ENCODE measurements at regions of chr1 and their contacts with region 1.

Region 1: GRCh38 chr1:99180343-99180808 is 83.9 kb upstream of the PLPPR4 start:
- DNase-seq: peak; percentile 49 to 63 (median 55)
- H3K4me3 ChIP-seq: no peak overlapping the region
- H3K4me3 Mint-ChIP-seq: no peak overlapping the region
- H3K27ac ChIP-seq: no peak overlapping the region
- H3K27ac Mint-ChIP-seq: no peak overlapping the region
- H3K4me1 ChIP-seq: no peaks in the 10 kb centered on the region
- H3K4me1 Mint-ChIP-seq: no peaks in the 10 kb centered on the region
- H3K27me3 ChIP-seq: no peaks in the 10 kb centered on the region
- H3K27me3 Mint-ChIP-seq: peaks cover 1 to 3% of the 10 kb centered on the region in 2 donors

Region 2: DNA sequence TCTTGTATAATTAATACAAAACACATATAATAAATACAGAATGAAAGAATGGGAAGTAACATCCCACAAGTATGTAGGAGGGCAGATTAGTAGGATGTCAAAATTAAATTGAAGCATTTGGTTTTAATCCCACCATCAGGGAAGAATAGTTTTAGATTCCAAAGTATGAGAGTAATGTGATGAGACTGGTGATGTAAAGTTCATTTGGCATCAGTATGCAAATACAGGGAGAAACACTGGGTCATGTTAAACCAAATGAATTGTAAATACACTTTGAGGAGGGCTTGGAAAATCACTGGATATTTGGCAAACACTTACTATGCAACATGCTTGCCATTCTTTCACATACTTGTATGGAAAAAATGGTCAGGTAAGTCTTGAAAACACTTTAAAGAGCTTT is 1618.3 kb before region 1 on chr1:
- CTCF ChIA-PET with region 1: no interaction called
- POLR2A ChIA-PET with region 1: no interaction called
- intact Hi-C with region 1: no loop called
- DNase-seq: no peak
- H3K4me3 ChIP-seq: no peak overlapping the region
- H3K4me3 Mint-ChIP-seq: no peak overlapping the region
- H3K27ac ChIP-seq: no peak overlapping the region
- H3K27ac Mint-ChIP-seq: peak overlapping the region in 1 of 7 donors; percentile 8
- H3K4me1 ChIP-seq: no peaks in the 10 kb centered on the region
- H3K4me1 Mint-ChIP-seq: peaks cover 0 to 3% (median 0%) of the 10 kb centered on the region in 4 donors
- H3K27me3 ChIP-seq: no peaks in the 10 kb centered on the region
- H3K27me3 Mint-ChIP-seq: no peaks in the 10 kb centered on the region

Region 3: DNA sequence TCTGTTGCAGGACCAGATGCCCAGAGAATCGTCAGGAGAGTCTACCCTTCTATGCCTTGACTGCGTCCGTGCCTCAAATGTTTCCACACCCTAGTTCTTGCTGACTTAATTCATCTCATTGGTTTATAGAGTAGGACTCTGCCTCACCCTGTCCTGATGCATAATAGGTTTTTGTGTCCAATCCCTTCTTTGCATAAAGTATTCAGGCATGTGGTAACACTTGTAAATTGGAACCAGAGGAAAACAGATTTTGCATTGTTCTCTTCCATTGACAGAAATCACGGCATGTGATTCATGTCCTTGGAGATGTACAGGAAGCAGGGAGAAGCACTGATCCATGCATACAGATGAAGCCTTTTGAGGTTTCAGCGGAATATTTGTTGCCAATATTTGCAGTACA is 205.3 kb before region 1 on chr1:
- CTCF ChIA-PET with region 1: no interaction called
- POLR2A ChIA-PET with region 1: no interaction called
- intact Hi-C with region 1: no loop called
- DNase-seq: no peak
- H3K4me3 ChIP-seq: no peak overlapping the region
- H3K4me3 Mint-ChIP-seq: no peak overlapping the region
- H3K27ac ChIP-seq: no peak overlapping the region
- H3K27ac Mint-ChIP-seq: no peak overlapping the region
- H3K4me1 ChIP-seq: no peaks in the 10 kb centered on the region
- H3K4me1 Mint-ChIP-seq: peaks cover 0 to 1% (median 0%) of the 10 kb centered on the region in 4 donors
- H3K27me3 ChIP-seq: no peaks in the 10 kb centered on the region
- H3K27me3 Mint-ChIP-seq: no peaks in the 10 kb centered on the region

Region 4: DNA sequence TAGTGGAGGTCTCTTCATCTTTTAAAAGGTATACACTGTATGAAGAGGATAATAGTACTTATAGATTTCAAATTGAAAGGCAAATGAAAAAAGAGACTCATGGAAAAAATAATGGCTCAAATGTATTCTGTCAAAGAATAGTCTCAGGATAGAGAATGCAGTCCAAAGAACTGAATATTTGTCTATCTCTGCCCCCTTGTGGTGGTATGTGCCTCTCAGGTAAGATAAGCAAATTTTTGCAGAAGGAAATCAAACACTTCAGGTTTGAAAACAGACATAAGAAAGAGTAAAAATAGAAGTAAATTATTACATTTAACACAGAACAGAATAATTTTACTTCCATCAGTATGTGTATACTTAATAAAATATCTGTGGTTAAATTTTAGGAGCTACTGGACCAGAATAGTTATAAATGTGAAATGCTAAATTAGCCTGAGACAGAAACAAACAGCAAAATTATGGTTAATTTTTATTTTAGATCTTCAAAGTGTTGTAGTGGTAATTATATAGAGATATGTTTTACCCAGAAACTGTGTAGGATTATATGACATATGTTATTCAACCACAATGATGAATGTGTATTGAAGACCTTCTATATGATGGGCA is 301.1 kb after region 1 on chr1:
- CTCF ChIA-PET with region 1: interaction called, 3 read pairs
- POLR2A ChIA-PET with region 1: no interaction called
- intact Hi-C with region 1: loop called (anchors 1 kb)
- DNase-seq: peak; percentile 17 to 53 (median 47)
- H3K4me3 ChIP-seq: no peak overlapping the region
- H3K4me3 Mint-ChIP-seq: no peak overlapping the region
- H3K27ac ChIP-seq: no peak overlapping the region
- H3K27ac Mint-ChIP-seq: no peak overlapping the region
- H3K4me1 ChIP-seq: no peaks in the 10 kb centered on the region
- H3K4me1 Mint-ChIP-seq: no peaks in the 10 kb centered on the region
- H3K27me3 ChIP-seq: no peaks in the 10 kb centered on the region
- H3K27me3 Mint-ChIP-seq: peaks cover 7 to 8% of the 10 kb centered on the region in 2 donors

Region 5: DNA sequence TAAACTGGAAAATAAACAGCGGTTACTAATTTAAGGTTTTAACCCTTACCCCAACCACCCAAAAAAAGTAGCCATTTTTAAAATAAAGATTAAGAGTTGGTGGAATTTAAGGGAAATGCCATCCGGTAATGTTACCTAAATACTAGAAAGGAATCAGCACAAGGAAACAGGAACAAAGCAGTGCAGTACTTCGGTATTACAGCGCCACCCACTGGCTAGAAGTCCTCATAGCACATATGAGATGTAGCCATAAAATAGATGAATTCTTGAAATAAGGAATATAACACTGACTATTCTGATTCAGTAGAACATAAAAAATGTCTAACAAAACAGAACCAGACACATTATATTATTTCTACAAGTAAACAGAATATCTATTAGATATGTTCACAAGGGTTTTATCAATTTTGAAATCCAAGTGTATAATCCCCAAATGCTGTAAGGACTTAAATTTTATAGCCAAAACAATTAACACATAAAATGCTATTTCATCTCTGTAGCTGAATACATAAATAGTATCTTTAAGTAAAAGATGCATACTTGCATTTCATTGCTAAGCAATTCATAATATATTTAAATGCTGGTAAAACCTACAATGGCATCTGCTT is 527.3 kb after region 1 on chr1:
- CTCF ChIA-PET with region 1: interaction called, 10 read pairs
- POLR2A ChIA-PET with region 1: no interaction called
- intact Hi-C with region 1: loop called (anchors 1 kb)
- DNase-seq: peak in 4 of 5 donors; percentile 31 to 43 (median 40)
- H3K4me3 ChIP-seq: no peak overlapping the region
- H3K4me3 Mint-ChIP-seq: no peak overlapping the region
- H3K27ac ChIP-seq: no peak overlapping the region
- H3K27ac Mint-ChIP-seq: no peak overlapping the region
- H3K4me1 ChIP-seq: peaks cover 21% of the 10 kb centered on the region
- H3K4me1 Mint-ChIP-seq: peaks cover 14 to 29% (median 15%) of the 10 kb centered on the region in 4 donors
- H3K27me3 ChIP-seq: no peaks in the 10 kb centered on the region
- H3K27me3 Mint-ChIP-seq: no peaks in the 10 kb centered on the region

Measured in CD4-positive, alpha-beta memory T cell (primary cell).